ENCODE measurements at regions of chr19 and their contacts with region 1.

Region 1: GRCh38 chr19:53927739-53928138 is 18.7 kb downstream of the CACNG7 start:
- DNase-seq: peak; percentile 38

Region 2: GRCh38 chr19:53879140-53880081 is 48.3 kb before region 1 on chr19:
- in situ Hi-C with region 1: no loop called
- DNase-seq: no peak

Region 3: DNA sequence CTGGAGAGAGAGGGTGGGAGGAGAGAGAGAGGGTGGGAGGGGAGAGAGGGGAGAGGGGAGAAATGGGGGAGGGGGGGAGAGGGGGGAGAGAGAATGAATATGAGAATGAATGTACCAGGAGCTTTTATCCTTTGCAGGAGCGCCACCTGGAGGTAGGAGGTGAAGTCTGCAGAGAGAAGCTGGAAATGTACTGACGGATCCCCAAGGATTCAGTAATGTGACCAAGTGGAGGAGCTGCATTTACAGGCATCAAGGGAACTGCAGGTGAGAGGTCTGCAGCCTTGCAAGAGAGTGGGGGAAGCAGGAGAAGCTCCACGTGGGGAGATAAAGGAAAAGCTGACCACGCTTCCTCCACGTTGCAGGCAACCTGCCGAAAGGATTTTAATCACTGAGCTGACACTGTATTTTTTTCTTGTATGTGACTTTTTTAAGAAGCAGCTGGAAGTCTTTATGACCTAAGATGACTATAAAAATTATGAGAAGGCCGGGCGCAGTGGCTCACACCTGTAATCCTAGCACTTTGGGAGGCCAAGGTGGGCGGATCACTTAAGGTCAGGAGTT is 102.3 kb after region 1 on chr19:
- in situ Hi-C with region 1: loop called (anchors 25 kb)
- DNase-seq: peak; percentile 39